OCI-LY7 (cell line): ENCODE measurements at regions of chr2 and their contacts with region 1.

Region 1: DNA sequence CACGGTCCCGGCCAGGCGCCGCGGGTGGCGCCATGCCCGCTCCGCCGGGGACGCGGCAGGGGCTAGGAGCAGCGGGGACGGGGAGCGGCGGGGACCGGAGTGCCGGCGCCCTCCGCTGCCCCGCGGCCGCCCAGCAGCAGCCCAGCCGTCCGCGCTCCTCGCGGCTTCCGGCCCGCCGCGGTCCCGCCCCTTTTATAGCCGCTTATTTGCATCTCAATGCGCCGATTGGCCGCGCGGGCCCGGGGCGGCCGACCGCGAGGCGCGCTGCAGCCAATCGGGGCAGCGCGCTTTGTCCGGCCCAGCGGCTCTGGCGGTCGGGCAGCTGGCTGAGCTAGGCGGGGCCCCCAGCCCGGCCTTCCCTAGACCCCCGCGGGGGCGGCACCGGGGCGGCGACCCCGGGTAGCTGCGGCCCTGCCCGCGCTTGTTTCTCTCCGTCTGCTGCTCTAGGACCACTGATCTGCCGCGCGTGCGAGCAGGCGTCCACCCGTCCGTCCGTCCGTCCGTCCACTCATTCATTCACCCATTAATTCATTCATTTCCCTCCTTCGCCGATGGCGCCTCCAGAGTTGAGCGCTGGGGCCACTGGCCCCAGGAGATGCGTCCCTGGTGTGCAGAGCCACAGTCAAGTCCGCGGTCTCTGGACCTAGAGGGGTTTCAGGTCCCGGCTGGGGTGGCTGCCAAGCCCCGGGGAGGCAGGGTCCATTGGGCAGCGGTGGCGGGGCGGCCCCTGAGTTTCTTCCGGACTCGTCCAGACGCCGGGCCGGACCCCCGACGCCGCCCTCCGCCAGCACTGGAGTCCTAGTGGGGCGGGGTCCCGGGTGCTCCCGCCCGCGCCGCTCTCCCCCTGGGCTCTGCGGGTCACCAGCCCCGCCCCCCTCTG is at the start of gene HES6:
- DNase-seq: peak; percentile 89
- H3K4me3 ChIP-seq: peak within 1 kb of the TSS; percentile 72
- H3K27ac ChIP-seq: no peak within 1 kb of the TSS
- H3K4me1 ChIP-seq: peaks cover 6% of the 10 kb centered on the region
- CTCF ChIP-seq: no peak
- total RNA-seq, gene HES6: 13.1 and 20.5 TPM in 2 replicates

Region 2: GRCh38 chr2:237935740-237936452 is 304.2 kb before region 1 on chr2:
- CTCF ChIA-PET with region 1: no interaction called
- POLR2A ChIA-PET with region 1: no interaction called
- intact Hi-C with region 1: no loop called
- DNase-seq: no peak
- H3K4me3 ChIP-seq: no peak overlapping the region
- H3K27ac ChIP-seq: no peak overlapping the region
- H3K4me1 ChIP-seq: no peaks in the 10 kb centered on the region
- CTCF ChIP-seq: no peak

Region 3: GRCh38 chr2:237966565-237967462 is 273.3 kb before region 1 on chr2 and contains the start of gene UBE2F:
- CTCF ChIA-PET with region 1: no interaction called
- POLR2A ChIA-PET with region 1: no interaction called
- intact Hi-C with region 1: loop called (anchors 5 kb)
- DNase-seq: peak; percentile 98
- H3K4me3 ChIP-seq: peak within 1 kb of the TSS; percentile 83
- H3K27ac ChIP-seq: no peak within 1 kb of the TSS
- H3K4me1 ChIP-seq: peaks cover 25% of the 10 kb centered on the region
- CTCF ChIP-seq: no peak
- total RNA-seq, gene UBE2F: 18.1 and 19.9 TPM in 2 replicates

Region 4: DNA sequence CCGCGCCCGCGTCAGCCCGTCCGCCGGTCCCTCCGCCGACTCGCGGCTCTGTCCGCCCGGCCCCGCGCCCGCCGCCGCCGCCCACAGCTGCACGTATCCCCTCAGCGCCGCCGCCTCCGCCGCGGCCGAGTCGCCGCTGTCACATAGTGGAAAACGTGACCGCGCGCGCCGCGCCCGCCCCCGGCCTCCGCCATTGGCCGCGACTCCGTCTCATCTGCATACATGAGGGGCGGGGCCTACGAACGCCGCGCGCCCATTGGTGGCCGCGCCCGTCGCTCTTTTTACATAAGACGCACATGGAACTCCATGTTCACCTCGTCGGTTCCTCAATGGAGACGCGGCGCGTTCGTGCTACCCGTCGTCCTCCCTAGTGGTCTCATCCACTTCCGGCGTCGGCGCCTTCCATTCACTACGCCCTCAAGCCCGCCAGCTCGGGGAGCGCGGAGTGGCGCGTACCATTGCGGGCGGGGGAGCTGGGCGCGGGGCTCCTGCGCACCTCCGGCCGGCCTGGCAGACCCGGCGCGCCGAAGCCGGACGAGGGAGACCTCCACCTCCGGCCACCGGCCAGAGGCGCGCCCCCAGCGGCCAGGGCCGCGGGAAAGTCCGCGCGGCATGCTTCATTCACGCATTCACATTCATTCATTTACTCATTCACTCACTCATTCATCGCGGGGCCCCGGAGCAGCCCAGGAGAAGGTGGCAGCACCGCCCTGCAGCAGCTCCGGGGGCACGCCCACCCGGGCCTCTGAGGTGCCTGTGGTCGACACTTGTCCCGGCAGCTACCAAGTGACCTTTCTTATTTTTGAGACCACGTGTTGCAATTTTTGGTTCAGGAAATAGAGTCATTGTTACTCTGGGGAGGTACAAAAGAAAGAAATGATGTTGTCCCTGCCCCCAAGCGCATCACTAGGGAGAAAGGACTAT is 48.8 kb after region 1 on chr2:
- CTCF ChIA-PET with region 1: no interaction called
- POLR2A ChIA-PET with region 1: no interaction called
- intact Hi-C with region 1: loop called (anchors 2 kb)
- DNase-seq: peak; percentile 100
- H3K4me3 ChIP-seq: peak overlapping the region; percentile 76
- H3K27ac ChIP-seq: peak overlapping the region; percentile 54
- H3K4me1 ChIP-seq: peaks cover 24% of the 10 kb centered on the region
- CTCF ChIP-seq: peak; percentile 41; the same call in 1 of the 2 replicates

Region 5: DNA sequence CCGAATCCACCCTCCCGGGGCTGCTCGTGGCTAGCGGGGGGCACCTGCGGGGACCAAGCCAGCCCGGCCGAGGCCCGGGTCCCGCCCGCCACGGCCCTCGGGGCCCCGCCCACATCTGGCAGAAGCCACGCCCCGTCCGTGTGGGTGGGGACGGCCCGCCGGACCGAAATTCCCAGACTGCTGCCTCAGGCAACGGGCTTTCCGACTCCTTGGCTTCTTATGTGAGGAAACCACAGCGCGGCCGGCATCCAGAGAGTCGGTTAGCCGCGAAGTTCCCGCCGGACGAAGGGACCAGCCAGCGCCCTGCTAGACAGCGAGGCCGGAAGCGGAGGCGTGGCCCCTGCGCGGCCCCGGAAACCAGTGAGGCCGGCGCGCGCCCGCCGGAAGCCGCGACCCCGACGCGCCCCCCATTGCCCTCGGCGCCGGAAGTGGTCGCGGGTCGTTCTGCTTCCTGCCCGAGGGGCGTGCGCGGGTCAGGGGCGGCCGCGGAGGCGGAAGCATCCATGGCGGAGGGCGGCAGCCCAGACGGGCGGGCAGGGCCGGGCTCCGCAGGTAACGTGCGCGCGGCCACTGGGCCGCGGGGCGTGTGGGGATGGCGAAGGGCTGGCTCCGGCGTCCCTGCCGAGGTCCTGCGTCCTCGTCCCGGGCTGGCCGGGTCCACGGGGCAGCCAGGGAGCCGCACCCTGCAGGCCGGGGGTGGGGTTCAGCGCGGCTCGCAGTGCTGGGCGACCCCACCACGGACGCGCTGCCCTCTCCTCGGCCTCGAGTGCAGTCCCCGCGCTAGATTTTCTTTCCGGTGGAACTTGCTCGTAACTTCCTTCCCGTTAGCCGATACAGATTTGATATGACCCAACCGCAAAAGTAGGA is 186.7 kb after region 1 on chr2 and contains the start of gene ASB1:
- CTCF ChIA-PET with region 1: no interaction called
- POLR2A ChIA-PET with region 1: no interaction called
- intact Hi-C with region 1: loop called (anchors 5 kb)
- DNase-seq: peak; percentile 93
- H3K4me3 ChIP-seq: peak within 1 kb of the TSS; percentile 94
- H3K27ac ChIP-seq: peak within 1 kb of the TSS; percentile 70
- H3K4me1 ChIP-seq: peaks cover 21% of the 10 kb centered on the region
- CTCF ChIP-seq: no peak
- total RNA-seq, gene ASB1: 18.0 and 19.4 TPM in 2 replicates